ENCODE measurements at regions of chr1 and their contacts with region 1.

Region 1: DNA sequence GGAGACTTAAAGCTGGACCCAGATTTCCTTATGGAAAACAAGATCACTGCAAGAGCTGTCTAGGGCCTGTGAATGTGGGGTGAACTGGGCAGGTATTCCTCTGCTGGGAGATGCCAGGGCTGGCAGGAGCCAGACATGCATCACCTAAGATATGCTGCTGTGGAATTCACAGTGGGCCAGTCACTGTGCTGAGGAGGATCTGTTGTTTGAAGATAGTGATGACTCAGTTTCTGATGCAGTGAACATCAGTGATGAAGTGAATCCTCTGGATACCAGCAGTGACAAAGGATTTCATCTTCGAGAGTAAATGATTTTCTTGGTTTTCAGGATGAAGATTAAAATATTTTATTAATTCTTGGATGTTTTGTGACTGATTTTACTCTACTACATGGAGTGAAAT is 29.9 kb upstream of the CAMSAP2 start:
- DNase-seq: no peak
- H3K4me3 ChIP-seq: no peak overlapping the region
- H3K27ac ChIP-seq: no peak overlapping the region
- H3K4me1 ChIP-seq: no peaks in the 10 kb centered on the region
- H3K27me3 ChIP-seq: no peaks in the 10 kb centered on the region
- CTCF ChIP-seq: no peak

Region 2: DNA sequence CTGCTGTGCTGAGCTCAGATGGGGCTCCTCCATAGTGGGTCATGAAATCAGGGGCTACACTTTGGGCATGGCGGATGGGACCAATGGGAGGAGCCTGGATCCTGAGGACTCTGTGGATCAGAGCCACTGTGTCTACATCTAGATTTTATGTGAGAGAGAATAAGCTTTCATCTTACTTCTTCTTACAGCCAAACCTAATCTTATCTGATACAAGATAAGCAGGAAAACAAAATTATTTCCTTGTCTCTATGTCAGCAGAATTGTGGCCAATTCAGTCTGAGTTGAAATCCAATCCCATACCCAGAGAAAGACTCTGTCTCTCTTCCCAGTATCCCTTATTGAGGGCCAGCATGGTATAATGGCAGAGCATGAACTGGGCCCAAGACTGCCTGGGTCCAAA is 144.4 kb before region 1 on chr1:
- intact Hi-C with region 1: no loop called
- DNase-seq: no peak
- H3K4me3 ChIP-seq: no peak overlapping the region
- H3K27ac ChIP-seq: no peak overlapping the region
- H3K4me1 ChIP-seq: no peaks in the 10 kb centered on the region
- H3K27me3 ChIP-seq: no peaks in the 10 kb centered on the region
- CTCF ChIP-seq: no peak

Region 3: GRCh38 chr1:200693327-200693726 is 15.4 kb before region 1 on chr1:
- intact Hi-C with region 1: loop called (anchors 1 kb)
- DNase-seq: no peak
- H3K4me3 ChIP-seq: no peak overlapping the region
- H3K27ac ChIP-seq: no peak overlapping the region
- H3K4me1 ChIP-seq: no peaks in the 10 kb centered on the region
- H3K27me3 ChIP-seq: no peaks in the 10 kb centered on the region
- CTCF ChIP-seq: no peak

Measured in tibial artery (tissue), 4 donors.